B cell (primary cell): ENCODE measurements at regions of chr9 and their contacts with region 1.

Region 1: GRCh38 chr9:89497978-89498851 is at the start of gene SEMA4D:
- DNase-seq: peak; percentile 67
- ATAC-seq: peak; percentile 64
- H3K4me3 ChIP-seq: peak within 1 kb of the TSS; percentile 67 to 93 (median 81)
- H3K4me3 Mint-ChIP-seq: peak within 1 kb of the TSS; percentile 89
- H3K27ac ChIP-seq: peak within 1 kb of the TSS; percentile 55 to 83
- H3K27ac Mint-ChIP-seq: peak within 1 kb of the TSS; percentile 96
- H3K4me1 ChIP-seq: peaks cover 61 to 67% of the 10 kb centered on the region in 2 donors
- H3K4me1 Mint-ChIP-seq: peaks cover 84% of the 10 kb centered on the region
- H3K27me3 ChIP-seq: no peaks in the 10 kb centered on the region
- H3K27me3 Mint-ChIP-seq: no peaks in the 10 kb centered on the region
- CTCF ChIP-seq: no peak
- total RNA-seq, gene SEMA4D: 215 and 231 TPM in 2 replicates

Region 2: DNA sequence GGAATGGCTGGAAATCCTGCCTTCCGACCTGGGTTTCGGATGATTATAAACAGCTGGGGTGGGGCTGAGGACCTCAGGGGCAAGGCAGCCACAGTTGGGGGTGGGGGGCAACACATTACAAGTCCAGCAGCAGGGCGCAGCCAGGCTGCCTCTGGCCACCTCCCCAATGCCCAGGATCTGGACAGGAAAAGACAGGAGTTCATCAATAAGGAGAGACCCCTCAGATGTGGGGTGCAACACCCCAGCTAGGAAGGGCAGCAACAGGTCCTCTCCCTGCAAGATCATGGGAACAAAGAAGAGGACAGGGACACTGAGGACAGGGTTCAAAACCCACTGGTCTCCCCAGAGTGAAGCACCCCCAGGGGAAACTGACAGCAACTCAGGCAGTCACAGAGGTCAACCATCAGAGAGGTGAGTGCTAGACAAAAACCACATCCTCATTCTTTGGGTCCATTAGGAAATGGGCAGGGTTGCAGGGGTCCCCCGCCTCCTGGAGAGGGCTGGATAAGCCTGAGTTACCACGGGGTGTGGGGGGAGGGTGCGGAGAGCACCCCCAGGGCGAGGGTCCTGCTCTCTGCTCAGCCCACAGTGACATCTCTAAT is 33.8 kb before region 1 on chr9:
- CTCF ChIA-PET with region 1: no interaction called
- POLR2A ChIA-PET with region 1: no interaction called
- intact Hi-C with region 1: loop called (anchors 2 kb)
- DNase-seq: peak; percentile 32
- ATAC-seq: peak; percentile 37
- H3K4me3 ChIP-seq: peak overlapping the region; percentile 8 to 58 (median 20)
- H3K4me3 Mint-ChIP-seq: peak overlapping the region; percentile 76
- H3K27ac ChIP-seq: peak overlapping the region; percentile 67 to 78
- H3K27ac Mint-ChIP-seq: peak overlapping the region; percentile 78
- H3K4me1 ChIP-seq: peaks cover 72 to 75% of the 10 kb centered on the region in 2 donors
- H3K4me1 Mint-ChIP-seq: peaks cover 90% of the 10 kb centered on the region
- H3K27me3 ChIP-seq: no peaks in the 10 kb centered on the region
- H3K27me3 Mint-ChIP-seq: no peaks in the 10 kb centered on the region
- CTCF ChIP-seq: no peak

Region 3: GRCh38 chr9:89475891-89476440 is 22.2 kb before region 1 on chr9:
- CTCF ChIA-PET with region 1: no interaction called
- POLR2A ChIA-PET with region 1: interaction called, 10 read pairs
- intact Hi-C with region 1: no loop called
- DNase-seq: no peak
- ATAC-seq: no peak
- H3K4me3 ChIP-seq: no peak overlapping the region
- H3K4me3 Mint-ChIP-seq: no peak overlapping the region
- H3K27ac ChIP-seq: no peak overlapping the region
- H3K27ac Mint-ChIP-seq: no peak overlapping the region
- H3K4me1 ChIP-seq: peaks cover 31 to 37% of the 10 kb centered on the region in 2 donors
- H3K4me1 Mint-ChIP-seq: peaks cover 68% of the 10 kb centered on the region
- H3K27me3 ChIP-seq: no peaks in the 10 kb centered on the region
- H3K27me3 Mint-ChIP-seq: no peaks in the 10 kb centered on the region
- CTCF ChIP-seq: no peak

Region 4: DNA sequence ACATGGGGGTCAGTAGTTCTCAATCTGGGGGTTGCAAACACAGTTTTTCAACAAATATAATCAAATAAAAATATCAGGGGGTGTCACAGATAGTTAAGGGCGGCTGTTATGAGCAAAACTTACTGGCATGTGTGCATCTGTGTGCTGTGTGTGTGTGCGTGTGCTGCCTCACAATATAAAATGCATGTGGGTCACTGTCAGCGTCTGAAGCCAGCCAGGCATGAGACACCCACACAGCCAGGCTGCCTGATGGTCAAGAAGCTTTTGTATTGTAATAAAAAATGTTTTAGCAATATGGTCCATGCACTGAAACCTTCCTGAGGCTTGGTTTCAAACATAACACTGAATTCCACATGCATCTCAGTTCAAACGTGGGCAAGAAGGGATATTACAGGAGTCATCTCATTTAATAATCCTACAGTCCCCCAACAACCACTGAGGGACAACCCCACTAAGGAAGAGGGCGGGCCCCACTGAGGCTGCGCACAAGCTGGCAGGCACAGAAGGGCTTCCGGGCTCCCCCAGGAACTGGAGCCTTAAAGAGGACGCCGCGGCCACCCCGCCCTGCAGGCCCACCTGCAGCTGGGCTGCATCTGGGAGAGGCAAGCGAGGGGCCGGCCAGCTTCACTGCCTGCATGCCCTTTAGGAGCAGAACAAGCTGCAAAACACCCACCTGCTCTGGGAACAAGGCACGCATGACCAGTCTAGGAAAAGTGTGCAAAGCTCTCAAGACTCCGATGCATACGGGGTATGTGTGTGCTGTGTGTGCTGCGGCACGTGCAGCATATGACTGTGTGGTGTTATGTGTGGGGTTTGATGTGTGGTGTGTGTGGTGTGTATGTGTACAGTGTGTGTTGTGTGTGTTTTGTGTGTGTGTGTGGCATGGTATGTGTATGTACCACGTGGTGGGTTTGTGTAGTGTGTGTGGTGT is 14.4 kb before region 1 on chr9:
- CTCF ChIA-PET with region 1: interaction called, 10 read pairs
- POLR2A ChIA-PET with region 1: interaction called, 5 read pairs
- intact Hi-C with region 1: loop called (anchors 2 kb)
- DNase-seq: peak; percentile 73
- ATAC-seq: peak; percentile 76
- H3K4me3 ChIP-seq: peak overlapping the region; percentile 39 to 86 (median 58)
- H3K4me3 Mint-ChIP-seq: peak overlapping the region; percentile 91
- H3K27ac ChIP-seq: peak overlapping the region; percentile 48 to 84
- H3K27ac Mint-ChIP-seq: peak overlapping the region; percentile 93
- H3K4me1 ChIP-seq: peaks cover 47 to 50% of the 10 kb centered on the region in 2 donors
- H3K4me1 Mint-ChIP-seq: peaks cover 81% of the 10 kb centered on the region
- H3K27me3 ChIP-seq: no peaks in the 10 kb centered on the region
- H3K27me3 Mint-ChIP-seq: no peaks in the 10 kb centered on the region
- CTCF ChIP-seq: no peak

Region 5: DNA sequence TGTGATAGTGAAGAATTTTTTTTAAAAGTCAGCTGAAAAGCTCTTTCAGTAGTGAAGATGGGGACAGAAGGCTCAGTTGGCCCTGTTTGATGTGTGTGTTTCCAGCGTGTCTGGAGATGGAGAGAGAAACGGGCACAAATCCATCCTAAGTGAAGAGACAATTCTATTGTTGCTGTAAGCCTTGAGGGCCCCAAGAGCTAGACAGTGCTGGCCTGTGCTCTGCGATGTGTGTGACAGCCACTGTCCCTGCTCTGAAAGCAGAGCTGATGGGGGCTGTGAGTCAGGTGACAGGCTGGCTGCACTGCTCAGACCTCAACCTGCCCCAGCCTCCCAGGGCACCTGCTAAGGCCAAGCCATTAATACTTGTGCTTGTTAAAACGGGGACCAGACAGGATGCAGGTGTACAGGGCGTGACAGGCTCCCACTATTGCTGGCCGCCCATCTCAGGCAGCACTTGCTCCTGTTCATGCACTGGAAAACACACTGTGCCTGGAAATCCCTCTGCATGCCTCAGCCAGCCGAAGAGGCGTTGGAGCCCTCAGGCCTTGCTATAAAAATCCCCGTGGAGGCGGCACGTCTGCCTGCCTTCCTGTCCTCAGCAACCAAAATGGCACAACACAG is 44.3 kb after region 1 on chr9:
- CTCF ChIA-PET with region 1: interaction called, 4 read pairs
- POLR2A ChIA-PET with region 1: no interaction called
- intact Hi-C with region 1: loop called (anchors 2 kb)
- DNase-seq: peak; percentile 35
- ATAC-seq: peak; percentile 66
- H3K4me3 ChIP-seq: no peak overlapping the region
- H3K4me3 Mint-ChIP-seq: peak overlapping the region; percentile 48
- H3K27ac ChIP-seq: no peak overlapping the region
- H3K27ac Mint-ChIP-seq: peak overlapping the region; percentile 87
- H3K4me1 ChIP-seq: peaks cover 25 to 29% of the 10 kb centered on the region in 2 donors
- H3K4me1 Mint-ChIP-seq: peaks cover 32% of the 10 kb centered on the region
- H3K27me3 ChIP-seq: no peaks in the 10 kb centered on the region
- H3K27me3 Mint-ChIP-seq: no peaks in the 10 kb centered on the region
- CTCF ChIP-seq: no peak

Region 6: GRCh38 chr9:89902450-89903145 is 404.4 kb after region 1 on chr9:
- CTCF ChIA-PET with region 1: no interaction called
- POLR2A ChIA-PET with region 1: no interaction called
- intact Hi-C with region 1: no loop called
- DNase-seq: no peak
- ATAC-seq: no peak
- H3K4me3 ChIP-seq: no peak overlapping the region
- H3K4me3 Mint-ChIP-seq: no peak overlapping the region
- H3K27ac ChIP-seq: no peak overlapping the region
- H3K27ac Mint-ChIP-seq: no peak overlapping the region
- H3K4me1 ChIP-seq: no peaks in the 10 kb centered on the region
- H3K4me1 Mint-ChIP-seq: no peaks in the 10 kb centered on the region
- H3K27me3 ChIP-seq: peaks cover 0 to 3% (median 1%) of the 10 kb centered on the region in 4 experiments
- H3K27me3 Mint-ChIP-seq: peaks cover 27% of the 10 kb centered on the region
- CTCF ChIP-seq: no peak